Activated CD8-positive, alpha-beta T cell treated with anti-CD3 and anti-CD28 coated beads, Interleukin-2, amount 10 ng/mL, durations not matched to agents 7 days and 5 days (primary cell): ENCODE measurements at regions of chr16 and their contacts with region 1.

Region 1: GRCh38 chr16:27408012-27408601 is 6.1 kb downstream of the IL21R start:
- DNase-seq: peak; percentile 55
- ATAC-seq: peak; percentile 62
- H3K4me3 Mint-ChIP-seq: peak overlapping the region; percentile 40
- H3K27ac Mint-ChIP-seq: peak overlapping the region; percentile 84
- H3K4me1 Mint-ChIP-seq: peaks cover 82% of the 10 kb centered on the region
- H3K27me3 Mint-ChIP-seq: no peaks in the 10 kb centered on the region

Region 2: DNA sequence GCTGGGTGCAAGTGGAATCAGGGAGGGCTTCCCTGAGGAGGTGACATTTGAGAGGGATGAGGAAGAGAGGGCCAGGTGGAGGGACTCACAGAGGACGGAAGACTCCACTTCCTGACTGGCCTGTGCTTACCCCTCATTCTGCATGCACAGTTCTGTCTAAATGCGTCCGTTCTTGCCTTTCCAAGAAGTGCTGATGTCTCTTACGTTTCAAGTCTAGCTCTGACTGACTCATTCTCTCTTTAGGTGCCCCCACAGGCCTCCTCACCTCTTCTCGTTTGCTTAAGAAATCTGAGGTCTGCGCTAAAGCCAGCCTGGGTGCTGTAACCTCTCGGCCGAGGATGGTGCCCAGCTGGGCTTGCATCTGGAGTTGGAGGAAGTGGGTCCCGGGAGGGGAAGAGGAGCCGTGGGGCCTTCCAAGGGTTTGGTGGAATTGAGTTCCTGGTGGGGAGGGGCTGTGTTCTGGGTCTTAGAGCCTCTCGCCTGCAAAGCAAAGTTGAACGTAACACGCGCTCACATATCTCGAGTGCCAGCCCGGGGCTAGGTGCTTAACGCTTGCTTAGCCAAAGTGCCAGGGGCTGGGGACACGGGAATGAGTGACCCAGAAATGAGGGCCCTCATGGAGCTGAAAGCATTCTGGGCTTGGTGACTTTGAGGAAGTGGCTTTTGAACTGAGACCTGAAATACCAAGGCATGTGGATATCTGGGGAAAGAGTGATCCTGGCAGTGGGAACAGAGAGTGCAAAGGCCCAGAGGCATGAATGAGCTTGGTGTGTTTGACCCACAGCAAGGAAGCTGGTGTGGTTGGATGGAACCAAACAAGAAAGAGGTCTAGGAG is 89.5 kb before region 1 on chr16:
- CTCF ChIA-PET with region 1: interaction called, 7 read pairs
- POLR2A ChIA-PET with region 1: interaction called, 12 read pairs
- DNase-seq: peak; percentile 80
- ATAC-seq: peak; percentile 67
- H3K4me3 Mint-ChIP-seq: peak overlapping the region; percentile 90
- H3K27ac Mint-ChIP-seq: peak overlapping the region; percentile 93
- H3K4me1 Mint-ChIP-seq: peaks cover 81% of the 10 kb centered on the region
- H3K27me3 Mint-ChIP-seq: no peaks in the 10 kb centered on the region

Region 3: GRCh38 chr16:27341549-27341948 is 66.6 kb before region 1 on chr16:
- CTCF ChIA-PET with region 1: no interaction called
- POLR2A ChIA-PET with region 1: no interaction called
- DNase-seq: no peak
- ATAC-seq: no peak
- H3K4me3 Mint-ChIP-seq: no peak overlapping the region
- H3K27ac Mint-ChIP-seq: no peak overlapping the region
- H3K4me1 Mint-ChIP-seq: peaks cover 19% of the 10 kb centered on the region
- H3K27me3 Mint-ChIP-seq: no peaks in the 10 kb centered on the region

Region 4: DNA sequence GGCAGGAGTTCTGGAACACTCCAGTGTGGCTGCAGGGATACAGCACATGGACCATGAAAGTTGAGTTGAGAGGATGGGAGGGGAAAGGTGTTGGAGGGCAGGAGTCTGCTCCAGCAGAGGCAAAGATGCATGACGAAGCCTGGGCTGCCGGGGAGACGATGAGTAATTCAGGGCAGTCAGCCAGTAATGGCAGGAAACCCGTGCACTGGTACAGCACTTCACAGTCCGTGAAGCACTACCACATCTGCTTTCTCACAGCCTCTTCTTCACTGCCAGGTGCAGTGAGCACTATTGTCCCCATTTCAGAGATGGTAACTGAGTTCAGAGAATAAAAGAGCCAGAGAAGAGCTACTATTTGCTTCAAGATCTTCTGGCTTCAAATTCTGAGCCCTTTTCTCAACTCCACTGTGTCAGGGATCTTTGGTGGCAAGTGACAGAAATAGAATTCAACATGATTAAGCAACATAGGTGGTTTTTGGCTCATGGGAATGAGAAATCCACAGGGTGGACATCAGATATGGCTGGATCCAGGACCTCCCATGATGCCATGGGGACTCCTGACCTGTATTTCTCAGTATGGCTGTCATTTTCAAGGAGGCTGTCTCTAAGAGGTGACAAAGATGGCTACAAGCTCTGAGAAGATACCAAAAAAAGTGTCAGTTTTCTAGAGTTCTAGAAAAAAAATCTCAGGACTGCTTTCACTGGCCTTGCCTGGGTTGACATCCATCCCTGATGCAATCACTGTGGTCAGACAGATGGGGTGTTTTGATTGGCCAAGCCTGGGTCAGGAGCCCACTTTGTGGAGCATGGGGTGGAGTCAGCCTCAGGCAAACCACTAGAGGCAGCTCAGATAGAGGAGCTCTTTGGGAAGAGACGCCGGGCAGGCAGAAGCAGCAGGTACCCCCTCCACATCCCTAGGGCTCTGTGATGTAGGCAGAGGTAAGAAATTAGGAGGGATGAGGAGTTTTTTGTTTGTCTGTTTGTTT is 18.6 kb after region 1 on chr16:
- CTCF ChIA-PET with region 1: interaction called, 26 read pairs
- POLR2A ChIA-PET with region 1: interaction called, 10 read pairs
- DNase-seq: peak; percentile 84
- ATAC-seq: peak; percentile 96
- H3K4me3 Mint-ChIP-seq: peak overlapping the region; percentile 66
- H3K27ac Mint-ChIP-seq: peak overlapping the region; percentile 87
- H3K4me1 Mint-ChIP-seq: peaks cover 77% of the 10 kb centered on the region
- H3K27me3 Mint-ChIP-seq: no peaks in the 10 kb centered on the region

Region 5: DNA sequence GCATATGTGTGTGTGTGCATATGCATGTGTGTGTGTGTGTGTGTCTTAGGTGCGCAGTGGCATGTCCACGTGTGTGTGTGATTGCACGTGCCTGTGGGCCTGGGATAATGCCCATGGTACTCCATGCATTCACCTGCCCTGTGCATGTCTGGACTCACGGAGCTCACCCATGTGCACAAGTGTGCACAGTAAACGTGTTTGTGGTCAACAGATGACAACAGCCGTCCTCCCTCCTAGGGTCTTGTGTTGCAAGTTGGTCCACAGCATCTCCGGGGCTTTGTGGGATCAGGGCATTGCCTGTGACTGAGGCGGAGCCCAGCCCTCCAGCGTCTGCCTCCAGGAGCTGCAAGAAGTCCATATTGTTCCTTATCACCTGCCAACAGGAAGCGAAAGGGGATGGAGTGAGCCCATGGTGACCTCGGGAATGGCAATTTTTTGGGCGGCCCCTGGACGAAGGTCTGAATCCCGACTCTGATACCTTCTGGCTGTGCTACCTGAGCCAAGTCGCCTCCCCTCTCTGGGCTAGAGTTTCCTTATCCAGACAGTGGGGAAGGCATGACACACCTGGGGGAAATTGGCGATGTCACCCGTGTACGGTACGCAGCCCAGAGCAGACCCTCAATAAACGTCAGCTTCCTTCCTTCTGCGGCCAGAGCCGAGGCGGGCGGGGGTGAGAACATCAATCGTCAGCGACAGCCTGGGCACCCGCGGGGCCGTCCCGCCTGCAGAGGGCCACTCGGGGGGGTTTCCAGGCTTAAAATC is 41.5 kb after region 1 on chr16:
- CTCF ChIA-PET with region 1: interaction called, 11 read pairs
- POLR2A ChIA-PET with region 1: interaction called, 19 read pairs
- DNase-seq: peak; percentile 88
- ATAC-seq: peak; percentile 71
- H3K4me3 Mint-ChIP-seq: peak overlapping the region; percentile 72
- H3K27ac Mint-ChIP-seq: peak overlapping the region; percentile 95
- H3K4me1 Mint-ChIP-seq: peaks cover 71% of the 10 kb centered on the region
- H3K27me3 Mint-ChIP-seq: no peaks in the 10 kb centered on the region

Region 6: DNA sequence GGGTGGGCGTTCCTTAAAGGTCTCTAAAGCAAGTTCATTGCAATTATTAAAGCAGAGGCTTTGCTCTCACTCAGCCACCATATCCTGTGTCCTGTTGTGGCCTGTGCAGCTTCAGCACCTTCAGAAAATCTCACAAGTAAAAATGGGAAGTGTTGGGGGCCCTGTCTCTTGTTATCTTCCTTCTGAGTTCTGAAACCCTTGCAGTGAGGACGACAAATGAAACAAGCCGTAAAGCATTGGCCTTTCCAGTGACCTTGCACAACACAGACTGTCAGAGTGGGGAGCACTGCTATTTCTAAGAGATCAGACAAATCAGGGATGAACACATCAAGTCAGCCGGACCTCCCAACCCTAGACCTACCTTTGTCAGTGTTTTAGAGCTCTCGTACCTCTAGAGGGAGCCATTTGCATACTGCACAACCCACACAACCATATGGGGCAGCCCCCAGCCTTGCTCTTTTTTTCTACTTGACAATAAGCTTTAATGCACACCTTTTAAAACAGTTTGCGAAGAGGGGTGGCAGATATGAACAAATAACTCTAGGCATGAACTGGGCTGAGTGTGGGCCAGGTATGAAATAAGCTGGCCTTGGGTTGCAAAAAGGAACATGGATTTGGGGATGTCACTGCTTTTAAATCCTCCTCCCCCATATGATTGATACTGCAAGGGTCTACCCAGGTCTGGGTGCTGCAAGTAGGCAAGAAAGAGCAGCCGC is 231.6 kb after region 1 on chr16:
- CTCF ChIA-PET with region 1: no interaction called
- POLR2A ChIA-PET with region 1: no interaction called
- DNase-seq: peak; percentile 35
- ATAC-seq: peak; percentile 70
- H3K4me3 Mint-ChIP-seq: no peak overlapping the region
- H3K27ac Mint-ChIP-seq: no peak overlapping the region
- H3K4me1 Mint-ChIP-seq: peaks cover 7% of the 10 kb centered on the region
- H3K27me3 Mint-ChIP-seq: no peaks in the 10 kb centered on the region